WTC11 (cell line): ENCODE measurements at regions of chr1 and their contacts with region 1.

Region 1: DNA sequence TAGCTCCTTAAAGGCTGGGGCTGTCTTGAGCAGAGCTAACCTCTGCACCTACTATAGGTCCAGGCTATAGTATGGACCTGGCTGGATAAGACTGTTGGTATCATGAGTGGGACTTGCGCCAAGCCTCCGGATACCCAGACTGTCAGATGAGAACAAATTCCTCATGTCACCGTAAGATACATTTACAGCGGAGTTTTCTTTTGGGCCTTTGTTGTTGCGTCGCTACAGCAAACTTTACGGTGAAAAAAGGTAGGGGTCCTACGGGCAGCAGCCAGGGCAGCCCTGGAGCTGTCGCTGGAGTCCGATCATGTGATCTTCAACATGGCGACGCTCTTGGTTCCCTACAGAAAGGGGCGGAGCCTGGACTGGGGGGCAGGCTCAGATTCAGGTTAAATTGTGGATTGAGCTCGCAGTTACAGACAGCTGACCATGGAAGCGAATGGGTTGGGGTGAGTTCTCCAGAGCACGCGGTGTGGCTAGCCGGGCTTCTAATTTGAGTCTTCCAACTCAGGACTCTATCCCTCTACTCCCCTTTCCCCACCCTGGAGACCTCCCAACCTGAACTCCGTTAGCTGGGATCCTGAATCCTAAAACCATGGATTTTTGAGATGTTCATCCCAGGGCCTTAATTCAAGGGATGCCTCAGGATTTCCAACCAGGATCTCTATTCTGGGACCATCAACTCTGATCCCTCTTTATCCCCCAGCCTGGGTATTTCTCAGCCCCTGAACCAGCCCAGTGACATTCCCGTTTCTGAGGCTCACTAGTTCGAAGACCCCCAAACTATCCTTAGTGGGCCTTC is at the start of gene UROD:
- DNase-seq: peak; percentile 94
- ATAC-seq: peak; percentile 63
- H3K4me3 Mint-ChIP-seq: peak within 1 kb of the TSS; percentile 68
- H3K27ac Mint-ChIP-seq: peak within 1 kb of the TSS; percentile 77
- H3K4me1 Mint-ChIP-seq: peaks cover 21% of the 10 kb centered on the region
- H3K27me3 Mint-ChIP-seq: peaks cover 5% of the 10 kb centered on the region; the same call in 1 of the 2 replicates
- CTCF ChIP-seq: no peak
- total RNA-seq, gene UROD: 95.2 to 118 TPM (median 96.0 TPM) in 3 replicates

Region 2: GRCh38 chr1:44792783-44793714 is 219.0 kb before region 1 on chr1:
- CTCF ChIA-PET with region 1: interaction called, 19 read pairs
- POLR2A ChIA-PET with region 1: interaction called, 5 read pairs
- DNase-seq: no peak
- ATAC-seq: peak; percentile 2; the same call in 1 of the 2 replicates
- H3K4me3 Mint-ChIP-seq: peak overlapping the region; percentile 20
- H3K27ac Mint-ChIP-seq: peak overlapping the region; percentile 79
- H3K4me1 Mint-ChIP-seq: peaks cover 15% of the 10 kb centered on the region
- H3K27me3 Mint-ChIP-seq: no peaks in the 10 kb centered on the region
- CTCF ChIP-seq: no peak

Region 3: GRCh38 chr1:44826375-44827196 is 185.5 kb before region 1 on chr1:
- CTCF ChIA-PET with region 1: interaction called, 17 read pairs
- POLR2A ChIA-PET with region 1: interaction called, 3 read pairs
- DNase-seq: no peak
- ATAC-seq: peak; percentile 20
- H3K4me3 Mint-ChIP-seq: no peak overlapping the region
- H3K27ac Mint-ChIP-seq: no peak overlapping the region
- H3K4me1 Mint-ChIP-seq: peaks cover 8% of the 10 kb centered on the region
- H3K27me3 Mint-ChIP-seq: no peaks in the 10 kb centered on the region
- CTCF ChIP-seq: no peak

Region 4: GRCh38 chr1:44985747-44986359 is 26.2 kb before region 1 on chr1:
- CTCF ChIA-PET with region 1: interaction called, 18 read pairs
- POLR2A ChIA-PET with region 1: interaction called, 3 read pairs
- DNase-seq: no peak
- ATAC-seq: no peak
- H3K4me3 Mint-ChIP-seq: peak overlapping the region; percentile 100
- H3K27ac Mint-ChIP-seq: no peak overlapping the region
- H3K4me1 Mint-ChIP-seq: peaks cover 18% of the 10 kb centered on the region
- H3K27me3 Mint-ChIP-seq: peaks cover 11% of the 10 kb centered on the region
- CTCF ChIP-seq: no peak

Region 5: GRCh38 chr1:45490626-45491486 is 478.8 kb after region 1 on chr1 and contains the start of gene TESK2:
- CTCF ChIA-PET with region 1: interaction called, 16 read pairs
- POLR2A ChIA-PET with region 1: no interaction called
- DNase-seq: peak; percentile 98
- ATAC-seq: peak; percentile 95
- H3K4me3 Mint-ChIP-seq: no peak within 1 kb of the TSS
- H3K27ac Mint-ChIP-seq: no peak within 1 kb of the TSS
- H3K4me1 Mint-ChIP-seq: peaks cover 5% of the 10 kb centered on the region; the same call in 1 of the 2 replicates
- H3K27me3 Mint-ChIP-seq: no peaks in the 10 kb centered on the region
- CTCF ChIP-seq: no peak
- total RNA-seq, gene TESK2: 13.1 to 14.2 TPM (median 13.3 TPM) in 3 replicates